Activated B cell treated with CpG ODN at 0.5 μM for 24 hours (primary cell): ENCODE measurements at regions of chr6 and their contacts with region 1.

Region 1: GRCh38 chr6:2245094-2245876 is at the start of gene GMDS:
- DNase-seq: peak; percentile 83
- ATAC-seq: peak; percentile 96
- H3K4me3 Mint-ChIP-seq: peak within 1 kb of the TSS; percentile 93
- H3K27ac Mint-ChIP-seq: peak within 1 kb of the TSS; percentile 89
- H3K4me1 Mint-ChIP-seq: peaks cover 32% of the 10 kb centered on the region
- H3K27me3 Mint-ChIP-seq: no peaks in the 10 kb centered on the region
- CTCF ChIP-seq: no peak
- total RNA-seq, gene GMDS: 30.1 and 33.7 TPM in 2 replicates

Region 2: DNA sequence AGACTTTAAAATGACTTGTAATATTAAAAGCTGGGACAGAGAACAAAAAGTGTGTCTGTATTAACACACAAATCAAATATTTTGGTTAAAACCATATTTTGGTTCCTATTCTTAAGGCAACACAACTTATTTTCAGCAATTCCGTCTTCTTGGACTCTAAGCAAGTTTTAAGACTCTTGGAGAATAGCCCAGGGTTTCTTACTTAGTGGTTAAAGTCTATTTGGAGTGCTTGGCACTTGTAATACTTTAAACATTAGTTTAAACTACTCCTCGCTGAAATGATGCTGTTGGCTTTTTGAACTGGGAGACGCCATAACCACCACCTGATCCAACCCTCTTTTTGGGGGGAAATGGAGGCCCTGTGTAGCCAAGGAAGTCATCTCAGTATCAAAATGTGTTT is 109.9 kb after region 1 on chr6:
- CTCF ChIA-PET with region 1: no interaction called
- POLR2A ChIA-PET with region 1: no interaction called
- intact Hi-C with region 1: no loop called
- DNase-seq: no peak
- ATAC-seq: no peak
- H3K4me3 Mint-ChIP-seq: no peak overlapping the region
- H3K27ac Mint-ChIP-seq: no peak overlapping the region
- H3K4me1 Mint-ChIP-seq: no peaks in the 10 kb centered on the region
- H3K27me3 Mint-ChIP-seq: no peaks in the 10 kb centered on the region
- CTCF ChIP-seq: no peak

Region 3: GRCh38 chr6:2733324-2733723 is 488.0 kb after region 1 on chr6:
- CTCF ChIA-PET with region 1: no interaction called
- POLR2A ChIA-PET with region 1: interaction called, 3 read pairs
- intact Hi-C with region 1: loop called (anchors 1 kb)
- DNase-seq: peak; percentile 52
- ATAC-seq: peak; percentile 99
- H3K4me3 Mint-ChIP-seq: peak overlapping the region; percentile 24
- H3K27ac Mint-ChIP-seq: peak overlapping the region; percentile 85
- H3K4me1 Mint-ChIP-seq: peaks cover 19% of the 10 kb centered on the region
- H3K27me3 Mint-ChIP-seq: no peaks in the 10 kb centered on the region
- CTCF ChIP-seq: no peak